ENCODE measurements at regions of chr1 and their contacts with region 1.

Region 1: DNA sequence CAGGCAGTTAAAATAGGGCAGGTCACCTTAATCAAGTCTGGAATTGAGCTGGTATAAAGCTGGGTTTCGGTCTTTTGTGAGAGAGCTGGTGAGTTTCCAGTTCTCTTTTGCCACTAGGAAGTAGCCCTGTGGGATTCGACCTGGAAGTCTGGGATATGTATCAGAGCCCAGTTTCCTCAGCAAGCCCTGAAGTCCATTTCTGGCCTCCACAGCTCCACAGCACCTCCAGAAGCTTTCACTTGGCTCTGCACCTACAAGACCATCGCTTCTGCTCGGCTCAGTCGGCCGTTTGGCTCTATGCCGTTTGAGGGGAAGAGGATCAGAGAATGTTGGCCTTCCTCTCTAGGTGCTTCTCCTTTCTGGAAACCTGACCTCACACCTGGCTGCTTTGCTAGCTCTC is 148.0 kb downstream of the GALNT2 start:
- DNase-seq: peak; percentile 92
- H3K4me3 ChIP-seq: no peak overlapping the region
- H3K27ac ChIP-seq: peak overlapping the region; percentile 33
- H3K4me1 ChIP-seq: peaks cover 27% of the 10 kb centered on the region
- H3K27me3 ChIP-seq: no peaks in the 10 kb centered on the region
- CTCF ChIP-seq: peak; percentile 70 to 87
- POLR2A ChIP-seq: no peak

Region 2: GRCh38 chr1:229661022-229661877 is 553.8 kb before region 1 on chr1:
- CTCF ChIA-PET with region 1: interaction called, 29 read pairs
- POLR2A ChIA-PET with region 1: interaction called, 3 read pairs
- dilution Hi-C with region 1: no loop called
- intact Hi-C with region 1: loop called (anchors 1 kb)
- DNase-seq: peak; percentile 61
- H3K4me3 ChIP-seq: no peak overlapping the region
- H3K27ac ChIP-seq: no peak overlapping the region
- H3K4me1 ChIP-seq: peaks cover 17% of the 10 kb centered on the region
- H3K27me3 ChIP-seq: no peaks in the 10 kb centered on the region
- CTCF ChIP-seq: peak; percentile 82 to 92
- POLR2A ChIP-seq: no peak

Region 3: DNA sequence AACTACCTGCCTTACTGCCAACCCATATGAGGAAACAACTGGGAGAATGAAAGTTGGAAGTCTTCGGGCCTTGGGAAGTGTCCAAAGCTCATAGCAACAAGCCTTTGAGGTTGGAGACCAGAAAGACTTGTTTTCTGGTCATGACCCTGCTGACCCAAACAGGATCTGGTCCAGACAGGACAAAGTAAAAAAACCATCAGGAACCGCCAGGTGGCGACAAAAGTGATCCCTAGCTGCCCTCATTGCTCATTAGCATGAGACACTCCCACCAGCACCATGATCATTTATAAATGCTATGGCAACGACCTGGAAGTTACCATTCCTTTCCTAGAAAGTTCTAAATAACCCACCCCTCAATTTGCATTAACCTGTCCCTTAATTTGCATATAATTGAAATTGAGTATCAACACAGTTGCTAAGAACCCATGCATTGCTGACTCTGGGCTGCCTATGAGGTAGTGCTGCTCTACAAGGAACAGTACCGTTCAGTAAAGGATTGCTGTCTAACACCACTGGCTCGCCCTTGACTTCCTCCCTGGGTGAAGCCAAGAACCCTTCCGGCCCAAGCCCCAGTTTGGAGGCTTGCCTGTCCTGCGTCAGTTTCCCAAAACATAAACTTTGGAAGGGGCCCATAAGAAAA is 499.9 kb before region 1 on chr1:
- CTCF ChIA-PET with region 1: interaction called, 27 read pairs
- POLR2A ChIA-PET with region 1: no interaction called
- dilution Hi-C with region 1: no loop called
- intact Hi-C with region 1: loop called (anchors 1 kb)
- DNase-seq: peak; percentile 32
- H3K4me3 ChIP-seq: no peak overlapping the region
- H3K27ac ChIP-seq: no peak overlapping the region
- H3K4me1 ChIP-seq: no peaks in the 10 kb centered on the region
- H3K27me3 ChIP-seq: no peaks in the 10 kb centered on the region
- CTCF ChIP-seq: peak; percentile 30 to 33
- POLR2A ChIP-seq: no peak

Region 4: DNA sequence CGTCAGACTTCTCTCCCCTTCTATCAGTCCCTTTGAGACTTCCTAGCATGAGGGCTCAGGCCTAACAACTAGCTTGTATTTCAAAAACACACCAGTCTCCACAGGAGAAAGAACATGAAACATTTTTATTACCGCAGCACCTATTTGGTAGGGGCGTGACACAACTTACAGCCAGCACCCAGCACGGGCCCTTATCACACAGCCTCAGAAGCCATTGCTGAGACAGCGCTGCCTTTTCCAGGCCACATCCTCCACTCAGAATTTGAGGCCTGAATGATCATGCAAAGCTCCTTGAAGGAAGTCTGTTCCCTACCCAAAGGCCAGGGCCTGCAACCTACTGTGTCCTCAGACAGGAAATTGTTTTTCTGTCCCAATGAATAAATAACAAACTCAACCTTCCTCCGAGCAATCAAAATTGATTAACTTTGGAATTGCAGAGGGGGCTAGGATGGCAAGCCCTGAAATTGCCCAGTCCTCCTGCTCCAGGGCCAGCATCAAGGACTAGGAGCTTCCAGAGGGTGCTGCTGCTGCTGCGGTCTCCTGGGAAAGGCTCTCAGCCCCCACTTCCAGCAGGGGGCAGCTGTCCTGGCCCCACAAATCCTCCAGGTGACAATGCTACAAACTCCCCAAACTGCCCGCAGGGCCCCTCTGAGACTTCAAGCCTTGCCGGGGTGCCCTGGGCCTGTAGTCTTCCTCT is 242.3 kb before region 1 on chr1:
- CTCF ChIA-PET with region 1: interaction called, 12 read pairs
- POLR2A ChIA-PET with region 1: no interaction called
- dilution Hi-C with region 1: no loop called
- intact Hi-C with region 1: loop called (anchors 1 kb)
- DNase-seq: peak; percentile 9
- H3K4me3 ChIP-seq: no peak overlapping the region
- H3K27ac ChIP-seq: no peak overlapping the region
- H3K4me1 ChIP-seq: no peaks in the 10 kb centered on the region
- H3K27me3 ChIP-seq: no peaks in the 10 kb centered on the region
- CTCF ChIP-seq: peak; percentile 9 to 37
- POLR2A ChIP-seq: no peak

Region 5: DNA sequence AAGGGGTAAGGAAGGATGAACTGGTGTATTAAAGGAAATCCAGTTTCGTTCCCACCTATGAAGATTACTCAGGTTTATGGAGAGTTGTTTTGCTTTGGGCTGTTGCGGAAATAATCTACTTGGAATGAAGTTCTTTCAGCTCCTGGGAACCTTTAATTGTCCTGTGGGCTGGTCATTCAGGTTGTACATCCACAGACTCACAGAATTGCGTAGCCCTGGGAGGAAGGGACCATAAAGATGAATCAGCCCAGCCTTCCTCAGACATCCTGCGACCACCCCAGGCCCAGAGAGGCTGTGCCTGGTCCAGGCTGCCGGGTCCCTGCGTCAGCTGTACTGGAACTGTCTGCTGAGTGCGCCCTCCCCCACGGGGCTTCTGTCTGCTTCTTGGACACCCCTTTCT is 75.3 kb before region 1 on chr1:
- CTCF ChIA-PET with region 1: no interaction called
- POLR2A ChIA-PET with region 1: no interaction called
- dilution Hi-C with region 1: no loop called
- intact Hi-C with region 1: no loop called
- DNase-seq: no peak
- H3K4me3 ChIP-seq: no peak overlapping the region
- H3K27ac ChIP-seq: no peak overlapping the region
- H3K4me1 ChIP-seq: no peaks in the 10 kb centered on the region
- H3K27me3 ChIP-seq: no peaks in the 10 kb centered on the region
- CTCF ChIP-seq: no peak
- POLR2A ChIP-seq: no peak

Region 6: DNA sequence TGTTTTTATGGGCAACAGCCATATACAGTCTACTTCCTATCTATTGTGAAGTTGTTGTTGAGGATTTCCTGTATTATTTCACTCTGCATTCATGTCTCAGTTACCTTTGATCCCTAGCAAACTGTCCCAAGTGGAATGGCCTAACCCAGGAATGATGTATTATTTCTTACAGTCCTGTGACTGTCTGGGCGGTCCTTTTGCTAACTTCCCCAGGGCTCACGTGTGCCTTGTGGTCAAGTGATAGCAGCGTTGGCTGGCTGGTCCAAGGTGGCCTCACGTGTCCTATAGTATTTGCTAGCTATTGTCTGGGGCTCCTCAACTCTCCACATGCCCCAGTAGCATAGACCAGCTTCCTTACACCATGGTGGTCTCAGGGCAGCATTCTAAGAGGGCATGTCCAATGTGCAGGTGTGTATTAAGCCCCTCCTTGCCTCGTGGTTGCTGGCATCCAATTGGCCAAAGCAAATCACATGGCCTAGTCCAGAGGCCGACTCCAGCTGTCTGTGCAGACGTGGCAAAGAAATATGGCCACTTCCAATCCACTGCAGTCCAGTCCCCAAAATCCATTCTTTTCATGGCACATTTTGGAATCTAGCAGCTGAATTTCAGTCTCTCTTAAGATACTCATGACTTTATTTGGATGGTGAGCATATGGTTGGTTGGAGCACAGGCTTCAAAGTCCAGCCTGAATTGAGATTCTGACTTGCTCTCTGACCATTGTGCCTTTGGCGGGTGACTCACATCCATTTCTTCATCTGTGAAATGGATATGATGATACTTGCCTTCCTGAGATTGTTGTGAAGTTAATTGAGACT is 53.9 kb before region 1 on chr1:
- CTCF ChIA-PET with region 1: interaction called, 14 read pairs
- POLR2A ChIA-PET with region 1: interaction called, 4 read pairs
- dilution Hi-C with region 1: no loop called
- intact Hi-C with region 1: no loop called
- DNase-seq: peak; percentile 93
- H3K4me3 ChIP-seq: no peak overlapping the region
- H3K27ac ChIP-seq: no peak overlapping the region
- H3K4me1 ChIP-seq: peaks cover 15% of the 10 kb centered on the region
- H3K27me3 ChIP-seq: peaks cover 0 to 5% of the 10 kb centered on the region in 2 experiments
- CTCF ChIP-seq: no peak
- POLR2A ChIP-seq: no peak

Region 7: GRCh38 chr1:230167419-230167852 is 47.6 kb before region 1 on chr1:
- CTCF ChIA-PET with region 1: interaction called, 10 read pairs
- POLR2A ChIA-PET with region 1: no interaction called
- dilution Hi-C with region 1: no loop called
- intact Hi-C with region 1: loop called (anchors 1 kb)
- DNase-seq: peak; percentile 33
- H3K4me3 ChIP-seq: no peak overlapping the region
- H3K27ac ChIP-seq: no peak overlapping the region
- H3K4me1 ChIP-seq: no peaks in the 10 kb centered on the region
- H3K27me3 ChIP-seq: peaks cover 0 to 1% of the 10 kb centered on the region in 2 experiments
- CTCF ChIP-seq: peak; percentile 62 to 66
- POLR2A ChIP-seq: no peak

Region 8: GRCh38 chr1:230176871-230177411 is 38.1 kb before region 1 on chr1:
- CTCF ChIA-PET with region 1: interaction called, 11 read pairs
- POLR2A ChIA-PET with region 1: no interaction called
- dilution Hi-C with region 1: no loop called
- intact Hi-C with region 1: no loop called
- DNase-seq: peak; percentile 40
- H3K4me3 ChIP-seq: no peak overlapping the region
- H3K27ac ChIP-seq: no peak overlapping the region
- H3K4me1 ChIP-seq: no peaks in the 10 kb centered on the region
- H3K27me3 ChIP-seq: no peaks in the 10 kb centered on the region
- CTCF ChIP-seq: no peak
- POLR2A ChIP-seq: no peak